Mammary epithelial cell (primary cell): ENCODE measurements at regions of chr13 and their contacts with region 1.

Region 1: GRCh38 chr13:98556968-98557631 is 19.8 kb downstream of the STK24 start:
- DNase-seq: peak; percentile 76
- H3K4me3 ChIP-seq: no peak overlapping the region
- H3K27ac ChIP-seq: no peak overlapping the region
- H3K4me1 ChIP-seq: peaks cover 25% of the 10 kb centered on the region
- H3K27me3 ChIP-seq: no peaks in the 10 kb centered on the region
- CTCF ChIP-seq: peak; percentile 52 to 62

Region 2: GRCh38 chr13:98445340-98446233 is 111.5 kb before region 1 on chr13:
- CTCF ChIA-PET with region 1: no interaction called
- dilution Hi-C with region 1: no loop called
- in situ Hi-C with region 1: no loop called
- intact Hi-C with region 1: loop called (anchors 5 kb)
- DNase-seq: peak; percentile 50
- H3K4me3 ChIP-seq: no peak overlapping the region
- H3K27ac ChIP-seq: no peak overlapping the region
- H3K4me1 ChIP-seq: peaks cover 24% of the 10 kb centered on the region
- H3K27me3 ChIP-seq: no peaks in the 10 kb centered on the region
- CTCF ChIP-seq: peak; percentile 86 to 97

Region 3: DNA sequence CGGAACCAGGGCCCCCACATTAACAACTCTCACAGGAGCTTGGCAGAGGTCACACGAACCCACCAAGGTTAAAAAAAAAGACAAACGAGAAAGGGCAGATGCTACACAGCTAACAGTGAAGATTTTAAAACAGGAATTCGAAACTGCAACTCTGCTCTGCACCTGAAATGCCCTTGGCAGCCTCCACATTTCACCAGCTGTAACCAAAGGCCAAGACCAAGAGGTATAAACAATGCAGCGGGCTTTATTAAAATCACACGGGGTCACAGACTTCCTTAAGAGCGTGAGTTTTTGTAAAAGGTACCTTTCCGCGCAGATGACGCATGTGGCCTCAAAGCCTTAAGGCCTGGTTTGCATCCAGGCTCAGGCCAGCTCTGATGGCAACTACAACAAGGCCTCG is 68.4 kb before region 1 on chr13:
- CTCF ChIA-PET with region 1: no interaction called
- dilution Hi-C with region 1: no loop called
- in situ Hi-C with region 1: no loop called
- intact Hi-C with region 1: no loop called
- DNase-seq: no peak
- H3K4me3 ChIP-seq: no peak overlapping the region
- H3K27ac ChIP-seq: no peak overlapping the region
- H3K4me1 ChIP-seq: peaks cover 23% of the 10 kb centered on the region
- H3K27me3 ChIP-seq: no peaks in the 10 kb centered on the region
- CTCF ChIP-seq: no peak

Region 4: DNA sequence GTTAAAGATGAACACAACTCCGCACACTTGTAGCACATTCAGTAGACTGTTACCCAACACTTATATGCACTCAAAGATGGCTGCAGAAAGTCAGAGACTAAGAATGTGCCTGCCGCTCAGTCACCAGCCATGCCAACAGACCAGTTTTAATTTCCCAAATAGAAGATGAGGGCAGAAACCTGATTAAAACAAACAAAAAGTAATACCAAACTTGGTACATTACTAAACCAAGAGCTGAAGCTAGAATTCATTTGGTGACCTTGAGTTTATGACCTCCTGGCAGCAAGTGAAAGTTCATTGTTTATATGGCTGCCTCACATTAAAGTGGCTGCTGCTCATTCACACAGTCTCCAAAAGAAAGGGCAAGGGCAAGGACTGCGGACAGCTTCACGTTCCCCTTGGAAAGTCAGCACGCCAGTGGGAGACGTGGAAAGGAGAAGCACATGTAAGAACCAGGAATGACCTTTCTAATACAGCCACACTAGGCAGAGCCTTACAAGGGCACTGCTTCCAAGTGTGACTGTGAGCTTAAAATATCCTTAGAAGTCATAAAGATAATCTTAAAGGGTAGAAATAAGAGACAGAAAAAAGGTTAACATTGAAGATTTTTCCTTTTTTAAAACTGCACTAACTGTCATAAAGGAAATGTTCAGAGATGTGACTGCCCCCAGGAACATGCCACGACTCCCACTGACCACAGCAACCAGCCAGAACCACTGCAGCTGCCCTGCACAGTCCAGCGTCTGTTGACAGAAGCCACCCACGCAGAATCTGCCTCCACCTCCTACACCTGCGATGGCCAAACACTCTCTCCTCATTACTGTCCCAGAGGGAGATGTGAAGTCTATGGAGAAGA is 53.7 kb before region 1 on chr13:
- CTCF ChIA-PET with region 1: interaction called, 11 read pairs
- dilution Hi-C with region 1: no loop called
- in situ Hi-C with region 1: no loop called
- intact Hi-C with region 1: no loop called
- DNase-seq: no peak
- H3K4me3 ChIP-seq: no peak overlapping the region
- H3K27ac ChIP-seq: no peak overlapping the region
- H3K4me1 ChIP-seq: peaks cover 24% of the 10 kb centered on the region
- H3K27me3 ChIP-seq: no peaks in the 10 kb centered on the region
- CTCF ChIP-seq: no peak